ENCODE measurements at regions of chr7 and their contacts with region 1.

Region 1: DNA sequence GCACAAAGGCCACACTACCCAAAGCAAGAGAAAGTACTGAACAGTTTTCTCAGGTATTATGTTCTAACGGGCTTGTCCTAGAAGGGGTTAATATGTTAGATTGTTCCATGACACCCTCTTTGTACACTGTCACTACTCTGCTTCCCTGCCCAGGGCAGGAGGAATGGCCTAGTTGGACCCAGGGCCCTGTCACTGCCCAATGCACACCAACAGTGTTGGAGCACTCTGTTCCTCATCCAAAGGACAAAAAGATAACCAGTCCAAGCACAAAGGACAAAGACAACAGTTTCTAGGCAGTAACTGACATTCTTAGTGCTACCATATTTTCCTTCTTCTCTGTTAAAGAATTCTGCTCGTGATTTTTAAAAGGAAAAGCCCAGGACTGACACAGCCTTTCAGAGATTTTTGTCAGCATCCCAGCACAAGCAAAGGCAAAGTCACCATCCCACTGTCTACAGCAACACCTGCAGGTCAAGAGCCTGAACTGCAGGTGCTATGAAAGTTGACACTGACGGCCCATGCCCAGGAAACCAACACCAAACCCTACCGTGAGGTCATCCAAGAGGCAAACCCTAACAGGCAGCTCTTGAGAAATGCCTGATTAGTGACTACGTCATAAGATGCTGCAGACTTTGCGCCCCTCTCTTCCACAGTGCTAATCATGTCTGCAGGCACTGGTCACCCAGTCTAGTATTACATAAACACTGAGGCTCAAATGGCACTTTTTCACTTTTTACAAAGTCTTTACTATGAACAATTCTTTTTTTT is 13.2 kb downstream of the NUDCD3 start:
- DNase-seq: peak; percentile 24 to 34
- ATAC-seq: peak; percentile 81 to 93 (median 88)
- H3K4me3 ChIP-seq: no peak overlapping the region
- H3K27ac ChIP-seq: peak overlapping the region in 7 of 10 donors; percentile 33 to 60 (median 55)
- H3K4me1 ChIP-seq: peaks cover 0 to 45% (median 31%) of the 10 kb centered on the region in 9 donors
- H3K27me3 ChIP-seq: no peaks in the 10 kb centered on the region
- CTCF ChIP-seq: peak; percentile 68 to 95 (median 92)

Region 2: GRCh38 chr7:43625453-43625852 is 851.8 kb before region 1 on chr7:
- intact Hi-C with region 1: no loop called
- DNase-seq: no peak
- ATAC-seq: peak in 6 of 8 donors; percentile 20 to 73 (median 57)
- H3K4me3 ChIP-seq: no peak overlapping the region
- H3K27ac ChIP-seq: peak overlapping the region in 2 of 10 donors; percentile 1 to 6
- H3K4me1 ChIP-seq: peaks cover 0 to 35% (median 14%) of the 10 kb centered on the region in 9 donors
- H3K27me3 ChIP-seq: no peaks in the 10 kb centered on the region
- CTCF ChIP-seq: no peak

Region 3: DNA sequence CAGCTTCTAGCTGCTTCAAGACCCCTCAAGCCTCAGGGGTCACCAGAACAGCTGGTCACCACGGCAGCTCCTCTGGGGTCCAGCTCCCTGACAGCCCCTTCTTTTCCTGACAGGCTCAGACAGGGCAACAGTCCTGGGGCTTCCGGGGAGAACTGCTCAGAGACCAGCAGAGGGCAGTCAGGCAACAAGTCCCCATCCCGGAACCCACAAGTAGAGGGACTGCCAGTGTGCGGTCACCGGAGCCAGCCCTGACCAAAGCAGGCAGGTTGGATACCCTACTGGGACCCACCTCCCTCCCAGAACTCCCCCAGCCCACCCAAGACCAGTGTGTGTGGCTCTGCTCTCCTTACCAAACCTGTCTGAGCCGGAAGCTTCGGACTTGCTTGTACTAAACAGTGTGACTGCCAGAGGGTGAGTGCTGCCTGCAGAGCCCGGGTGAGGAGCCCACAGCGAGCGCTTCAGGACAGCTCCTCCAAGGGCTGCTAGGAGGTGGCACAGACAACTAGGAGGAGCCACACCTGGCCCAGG is 236.2 kb before region 1 on chr7:
- intact Hi-C with region 1: loop called (anchors 1 to 10 kb)
- DNase-seq: peak; percentile 65 to 70
- ATAC-seq: peak; percentile 72 to 88 (median 83)
- H3K4me3 ChIP-seq: no peak overlapping the region
- H3K27ac ChIP-seq: no peak overlapping the region
- H3K4me1 ChIP-seq: peaks cover 0 to 16% (median 5%) of the 10 kb centered on the region in 9 donors
- H3K27me3 ChIP-seq: no peaks in the 10 kb centered on the region
- CTCF ChIP-seq: peak; percentile 49 to 79 (median 72)

Region 4: DNA sequence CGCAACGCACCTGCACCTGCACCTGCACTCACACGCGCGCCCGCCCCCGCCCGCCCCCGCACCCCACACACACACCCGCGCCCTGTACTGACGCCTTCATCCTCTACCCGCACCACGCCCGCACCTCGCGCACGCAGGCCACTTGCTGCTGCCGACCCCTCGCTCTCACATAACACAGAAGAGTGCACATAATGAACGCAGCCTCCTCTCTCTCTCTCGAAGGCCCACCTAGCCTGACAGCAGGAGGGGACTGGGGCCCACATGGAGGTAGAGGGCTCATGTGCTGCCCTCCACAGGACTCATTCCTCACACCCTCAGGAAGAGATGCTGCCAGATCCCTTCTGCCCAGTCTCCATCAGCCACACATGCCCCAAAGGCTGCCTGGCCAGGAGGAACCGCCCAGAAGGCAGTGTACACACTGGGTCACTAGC is 151.4 kb before region 1 on chr7:
- intact Hi-C with region 1: loop called in 2 of 10 experiments (anchors 10 kb)
- DNase-seq: no peak
- ATAC-seq: peak in 7 of 8 donors; percentile 10 to 39 (median 24)
- H3K4me3 ChIP-seq: peak overlapping the region in 6 of 10 donors; percentile 27 to 50 (median 34)
- H3K27ac ChIP-seq: peak overlapping the region in 2 of 10 donors; percentile 48 to 77
- H3K4me1 ChIP-seq: peaks cover 0 to 52% (median 8%) of the 10 kb centered on the region in 9 donors
- H3K27me3 ChIP-seq: peaks cover 0 to 36% (median 19%) of the 10 kb centered on the region in 7 donors
- CTCF ChIP-seq: peak in 3 of 9 donors; percentile 34 to 37 (median 37)

Region 5: DNA sequence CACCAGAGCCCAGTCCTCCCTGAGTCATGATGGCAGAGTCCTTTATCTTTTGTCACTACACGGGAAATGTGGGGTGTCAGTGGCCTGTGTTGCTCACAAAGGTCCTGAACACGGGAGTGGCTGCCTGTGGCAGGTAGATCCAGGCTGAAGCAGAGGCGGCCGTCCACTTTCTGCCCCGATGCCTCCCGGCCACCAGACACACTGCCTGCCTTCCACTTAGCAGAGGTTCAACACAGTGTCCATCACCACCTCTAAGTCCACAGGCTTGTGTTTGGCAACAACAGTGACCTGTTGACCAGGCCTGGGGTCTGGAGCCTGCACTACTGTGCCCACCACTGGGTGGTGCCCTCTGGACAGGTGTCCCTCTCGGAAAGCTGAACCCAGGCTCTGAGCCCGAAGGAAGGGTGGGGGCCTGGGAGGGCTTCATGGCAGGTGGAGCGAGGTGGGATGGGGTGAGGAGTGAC is 102.0 kb before region 1 on chr7:
- intact Hi-C with region 1: loop called in 1 of 10 experiments (anchors 10 kb)
- DNase-seq: no peak
- ATAC-seq: peak in 6 of 8 donors; percentile 32 to 69 (median 60)
- H3K4me3 ChIP-seq: no peak overlapping the region
- H3K27ac ChIP-seq: no peak overlapping the region
- H3K4me1 ChIP-seq: no peaks in the 10 kb centered on the region
- H3K27me3 ChIP-seq: no peaks in the 10 kb centered on the region
- CTCF ChIP-seq: peak; percentile 17 to 58 (median 48)

Region 6: GRCh38 chr7:44534501-44534900 is 57.3 kb after region 1 on chr7:
- intact Hi-C with region 1: no loop called
- DNase-seq: no peak
- ATAC-seq: peak in 4 of 8 donors; percentile 14 to 54 (median 39)
- H3K4me3 ChIP-seq: no peak overlapping the region
- H3K27ac ChIP-seq: no peak overlapping the region
- H3K4me1 ChIP-seq: no peaks in the 10 kb centered on the region
- H3K27me3 ChIP-seq: no peaks in the 10 kb centered on the region
- CTCF ChIP-seq: peak; percentile 8 to 70 (median 49)

Region 7: GRCh38 chr7:44867073-44867995 is 390.1 kb after region 1 on chr7:
- intact Hi-C with region 1: no loop called
- DNase-seq: no peak
- ATAC-seq: peak in 6 of 8 donors; percentile 45 to 86 (median 60)
- H3K4me3 ChIP-seq: no peak overlapping the region
- H3K27ac ChIP-seq: peak overlapping the region in 1 of 10 donors; percentile 28
- H3K4me1 ChIP-seq: peaks cover 0 to 12% (median 5%) of the 10 kb centered on the region in 9 donors
- H3K27me3 ChIP-seq: no peaks in the 10 kb centered on the region
- CTCF ChIP-seq: no peak